Activated T-helper 1 cell treated with anti-CD3 and anti-CD28 coated beads, Interleukin-12 subunit alpha, Interleukin-12 subunit beta, Interleukin-2, Interleukin-4 antibody, amounts not matched to agents 30 ng/mL and 10 ng/mL and 1 ng/mL, durations not matched to agents 14 hours and 24 hours and 36 hours (primary cell): ENCODE measurements at regions of chr3 and their contacts with region 1.

Region 1: GRCh38 chr3:18787441-18787840 is 360.9 kb upstream of the KCNH8 start:
- DNase-seq: no peak
- H3K4me3 Mint-ChIP-seq: no peak overlapping the region
- H3K27ac Mint-ChIP-seq: no peak overlapping the region
- H3K4me1 Mint-ChIP-seq: peaks cover 8% of the 10 kb centered on the region
- H3K27me3 Mint-ChIP-seq: peaks cover 3% of the 10 kb centered on the region

Region 2: GRCh38 chr3:18649666-18650363 is 137.6 kb before region 1 on chr3:
- intact Hi-C with region 1: no loop called
- DNase-seq: peak; percentile 70
- H3K4me3 Mint-ChIP-seq: peak overlapping the region; percentile 59
- H3K27ac Mint-ChIP-seq: peak overlapping the region; percentile 94
- H3K4me1 Mint-ChIP-seq: peaks cover 94% of the 10 kb centered on the region
- H3K27me3 Mint-ChIP-seq: no peaks in the 10 kb centered on the region

Region 3: GRCh38 chr3:18766974-18767373 is 20.5 kb before region 1 on chr3:
- intact Hi-C with region 1: loop called (anchors 2 kb)
- DNase-seq: no peak
- H3K4me3 Mint-ChIP-seq: no peak overlapping the region
- H3K27ac Mint-ChIP-seq: no peak overlapping the region
- H3K4me1 Mint-ChIP-seq: peaks cover 21% of the 10 kb centered on the region
- H3K27me3 Mint-ChIP-seq: no peaks in the 10 kb centered on the region

Region 4: DNA sequence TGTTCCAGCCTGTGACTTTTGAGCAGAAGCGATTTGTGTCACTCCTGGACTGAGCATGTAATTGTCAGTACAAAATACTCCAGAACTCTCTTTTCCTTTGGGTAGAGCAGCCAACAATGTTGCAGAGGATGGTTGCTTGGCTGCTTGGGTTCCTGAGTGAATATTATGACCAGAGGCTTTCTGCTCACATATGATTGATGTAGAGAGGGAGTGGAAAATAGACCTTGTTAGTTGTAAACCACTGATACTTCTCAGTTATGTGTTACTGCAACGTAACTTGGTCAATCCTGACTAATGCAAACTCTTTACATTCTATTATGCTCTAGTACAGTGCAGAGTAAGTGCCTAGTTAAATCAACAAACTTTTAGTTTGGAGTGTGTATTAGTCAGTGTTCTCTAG is 38.2 kb after region 1 on chr3:
- intact Hi-C with region 1: loop called (anchors 2 kb)
- DNase-seq: no peak
- H3K4me3 Mint-ChIP-seq: no peak overlapping the region
- H3K27ac Mint-ChIP-seq: no peak overlapping the region
- H3K4me1 Mint-ChIP-seq: peaks cover 24% of the 10 kb centered on the region
- H3K27me3 Mint-ChIP-seq: no peaks in the 10 kb centered on the region

Region 5: GRCh38 chr3:18872466-18872865 is 85.0 kb after region 1 on chr3:
- intact Hi-C with region 1: loop called (anchors 5 kb)
- DNase-seq: no peak
- H3K4me3 Mint-ChIP-seq: no peak overlapping the region
- H3K27ac Mint-ChIP-seq: no peak overlapping the region
- H3K4me1 Mint-ChIP-seq: peaks cover 30% of the 10 kb centered on the region
- H3K27me3 Mint-ChIP-seq: no peaks in the 10 kb centered on the region